ENCODE measurements at regions of chr14 and their contacts with region 1.

Region 1: GRCh38 chr14:28751467-28752058 is 15.0 kb upstream of the FOXG1 start:
- DNase-seq: peak; percentile 7
- ATAC-seq: peak; percentile 90
- H3K4me3 ChIP-seq: no peak overlapping the region
- H3K27ac ChIP-seq: no peak overlapping the region
- H3K4me1 ChIP-seq: no peaks in the 10 kb centered on the region
- H3K27me3 ChIP-seq: peaks cover 0 to 3% of the 10 kb centered on the region in 2 experiments; a peak in 1 of 4 replicates
- CTCF ChIP-seq: peak; percentile 74 to 76 (median 75)
- EP300 ChIP-seq: no peak
- POLR2A ChIP-seq: no peak
- RAD21 ChIP-seq: peak; percentile 66

Region 2: DNA sequence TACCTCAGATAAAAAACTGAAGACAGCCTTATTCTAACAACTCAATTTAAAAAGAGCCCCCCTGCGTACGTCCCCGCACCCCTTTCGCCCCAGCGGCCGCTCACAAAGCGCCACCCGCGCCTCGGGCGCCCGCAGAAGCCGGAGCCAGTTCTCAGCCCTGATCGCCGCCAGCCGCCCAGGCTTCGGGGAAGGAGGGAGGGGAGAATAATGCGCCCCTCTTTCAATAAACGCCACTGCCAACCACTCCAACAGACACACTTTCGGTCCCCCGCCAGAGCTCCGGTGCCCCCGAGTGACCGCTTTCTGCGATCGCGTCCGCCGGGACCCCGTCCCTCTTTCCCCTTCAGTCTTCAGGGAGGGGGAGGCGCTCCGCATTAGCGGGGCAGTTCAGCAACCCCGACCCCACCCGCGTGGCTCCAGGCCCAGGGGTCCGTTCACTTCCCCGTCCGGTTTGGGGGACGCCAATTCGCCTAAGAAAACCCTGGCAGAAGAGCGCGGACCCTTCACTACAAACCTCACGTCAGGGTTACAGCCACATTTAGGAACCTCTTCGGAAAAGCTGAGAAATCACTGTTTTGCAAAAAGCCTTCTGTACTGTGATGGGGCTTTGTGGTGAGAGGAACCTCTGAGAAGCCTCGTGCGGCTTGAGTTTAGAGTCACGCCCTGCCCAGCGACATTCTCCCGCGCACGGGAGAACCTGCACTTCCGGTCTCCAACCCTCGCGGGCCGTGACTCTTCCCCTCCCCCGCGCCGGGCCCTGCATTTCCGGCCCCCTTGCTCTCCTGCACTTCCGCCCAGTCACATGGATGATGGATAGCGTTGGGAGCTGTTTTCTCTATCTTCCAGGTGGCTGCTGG is 33.8 kb after region 1 on chr14:
- CTCF ChIA-PET with region 1: no interaction called
- POLR2A ChIA-PET with region 1: no interaction called
- RAD21 ChIA-PET with region 1: no interaction called
- SMC1A ChIA-PET with region 1: no interaction called
- in situ Hi-C with region 1: no loop called
- intact Hi-C with region 1: no loop called
- DNase-seq: no peak
- ATAC-seq: no peak
- H3K4me3 ChIP-seq: no peak overlapping the region; the same call in 1 of the 2 replicates
- H3K27ac ChIP-seq: no peak overlapping the region
- H3K4me1 ChIP-seq: peaks cover 4% of the 10 kb centered on the region; the same call in 1 of the 2 replicates
- H3K27me3 ChIP-seq: no peaks in the 10 kb centered on the region
- CTCF ChIP-seq: no peak
- EP300 ChIP-seq: no peak
- POLR2A ChIP-seq: no peak
- RAD21 ChIP-seq: no peak

Region 3: GRCh38 chr14:29016050-29016900 is 264.7 kb after region 1 on chr14:
- CTCF ChIA-PET with region 1: no interaction called
- POLR2A ChIA-PET with region 1: no interaction called
- RAD21 ChIA-PET with region 1: no interaction called
- SMC1A ChIA-PET with region 1: no interaction called
- in situ Hi-C with region 1: no loop called
- intact Hi-C with region 1: loop called (anchors 5 kb)
- DNase-seq: no peak
- ATAC-seq: peak; percentile 69
- H3K4me3 ChIP-seq: no peak overlapping the region
- H3K27ac ChIP-seq: no peak overlapping the region
- H3K4me1 ChIP-seq: no peaks in the 10 kb centered on the region
- H3K27me3 ChIP-seq: no peaks in the 10 kb centered on the region
- CTCF ChIP-seq: peak; percentile 46 to 69 (median 53); a peak in 5 of 6 replicates
- EP300 ChIP-seq: no peak
- POLR2A ChIP-seq: no peak
- RAD21 ChIP-seq: peak; percentile 44

Region 4: GRCh38 chr14:29536886-29537511 is 785.4 kb after region 1 on chr14:
- CTCF ChIA-PET with region 1: interaction called, 3 read pairs
- POLR2A ChIA-PET with region 1: no interaction called
- RAD21 ChIA-PET with region 1: no interaction called
- SMC1A ChIA-PET with region 1: no interaction called
- in situ Hi-C with region 1: loop called (anchors 5 kb)
- intact Hi-C with region 1: loop called (anchors 2 kb)
- DNase-seq: no peak
- ATAC-seq: no peak
- H3K4me3 ChIP-seq: no peak overlapping the region
- H3K27ac ChIP-seq: no peak overlapping the region
- H3K4me1 ChIP-seq: no peaks in the 10 kb centered on the region
- H3K27me3 ChIP-seq: no peaks in the 10 kb centered on the region
- CTCF ChIP-seq: peak in 2 of 3 experiments; percentile 11 to 23; a peak in 1 of 6 replicates
- EP300 ChIP-seq: no peak
- POLR2A ChIP-seq: no peak
- RAD21 ChIP-seq: peak; percentile 46

Region 5: DNA sequence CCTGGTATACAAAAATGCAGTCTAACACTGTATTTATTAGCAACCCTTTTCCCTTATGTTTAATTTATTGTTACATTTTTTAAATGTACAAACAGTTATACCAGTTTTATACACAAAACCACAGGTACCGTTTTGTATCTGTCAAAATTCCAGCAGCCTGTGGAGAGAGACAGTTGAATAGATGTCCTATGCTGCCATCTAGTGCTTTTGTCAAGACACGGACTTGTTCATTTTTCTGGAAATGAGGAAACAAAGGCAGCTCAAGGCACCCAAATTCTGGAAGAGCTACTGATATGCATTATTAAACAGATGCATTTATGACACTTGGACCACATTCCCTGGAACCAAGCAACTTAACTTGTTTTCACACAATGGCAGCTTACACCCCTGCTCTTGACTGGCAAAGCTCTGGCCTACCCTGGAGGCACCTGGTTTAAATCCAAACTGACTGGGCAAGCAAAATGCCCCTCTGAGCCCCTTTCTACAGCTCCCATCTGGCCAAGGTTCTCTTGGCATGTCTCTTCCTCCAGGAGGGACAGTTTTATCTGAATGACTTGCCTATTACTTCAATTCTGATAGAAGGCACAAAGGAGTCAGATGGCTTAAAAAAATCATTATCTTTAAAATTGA is 1463.0 kb after region 1 on chr14:
- CTCF ChIA-PET with region 1: interaction called, 7 read pairs
- POLR2A ChIA-PET with region 1: no interaction called
- RAD21 ChIA-PET with region 1: no interaction called
- SMC1A ChIA-PET with region 1: interaction called, 3 read pairs
- in situ Hi-C with region 1: no loop called
- intact Hi-C with region 1: loop called (anchors 5 kb)
- DNase-seq: peak; percentile 8
- ATAC-seq: peak; percentile 63; the same call in 2 of the 3 replicates
- H3K4me3 ChIP-seq: no peak overlapping the region
- H3K27ac ChIP-seq: no peak overlapping the region
- H3K4me1 ChIP-seq: no peaks in the 10 kb centered on the region
- H3K27me3 ChIP-seq: no peaks in the 10 kb centered on the region
- CTCF ChIP-seq: peak in 2 of 3 experiments; percentile 41 to 54; a peak in 3 of 6 replicates
- EP300 ChIP-seq: no peak
- POLR2A ChIP-seq: no peak
- RAD21 ChIP-seq: peak; percentile 75

Region 6: GRCh38 chr14:30521899-30522736 is 1770.6 kb after region 1 on chr14:
- CTCF ChIA-PET with region 1: no interaction called
- POLR2A ChIA-PET with region 1: no interaction called
- RAD21 ChIA-PET with region 1: no interaction called
- SMC1A ChIA-PET with region 1: no interaction called
- in situ Hi-C with region 1: no loop called
- intact Hi-C with region 1: loop called (anchors 5 kb)
- DNase-seq: peak; percentile 9
- ATAC-seq: peak; percentile 65
- H3K4me3 ChIP-seq: no peak overlapping the region
- H3K27ac ChIP-seq: no peak overlapping the region
- H3K4me1 ChIP-seq: no peaks in the 10 kb centered on the region
- H3K27me3 ChIP-seq: no peaks in the 10 kb centered on the region
- CTCF ChIP-seq: peak; percentile 65 to 70 (median 68)
- EP300 ChIP-seq: no peak
- POLR2A ChIP-seq: no peak
- RAD21 ChIP-seq: peak; percentile 64